Activated CD4-positive, alpha-beta memory T cell treated with anti-CD3 and anti-CD28 coated beads for 36 hours (primary cell): ENCODE measurements at regions of chr2 and their contacts with region 1.

Region 1: DNA sequence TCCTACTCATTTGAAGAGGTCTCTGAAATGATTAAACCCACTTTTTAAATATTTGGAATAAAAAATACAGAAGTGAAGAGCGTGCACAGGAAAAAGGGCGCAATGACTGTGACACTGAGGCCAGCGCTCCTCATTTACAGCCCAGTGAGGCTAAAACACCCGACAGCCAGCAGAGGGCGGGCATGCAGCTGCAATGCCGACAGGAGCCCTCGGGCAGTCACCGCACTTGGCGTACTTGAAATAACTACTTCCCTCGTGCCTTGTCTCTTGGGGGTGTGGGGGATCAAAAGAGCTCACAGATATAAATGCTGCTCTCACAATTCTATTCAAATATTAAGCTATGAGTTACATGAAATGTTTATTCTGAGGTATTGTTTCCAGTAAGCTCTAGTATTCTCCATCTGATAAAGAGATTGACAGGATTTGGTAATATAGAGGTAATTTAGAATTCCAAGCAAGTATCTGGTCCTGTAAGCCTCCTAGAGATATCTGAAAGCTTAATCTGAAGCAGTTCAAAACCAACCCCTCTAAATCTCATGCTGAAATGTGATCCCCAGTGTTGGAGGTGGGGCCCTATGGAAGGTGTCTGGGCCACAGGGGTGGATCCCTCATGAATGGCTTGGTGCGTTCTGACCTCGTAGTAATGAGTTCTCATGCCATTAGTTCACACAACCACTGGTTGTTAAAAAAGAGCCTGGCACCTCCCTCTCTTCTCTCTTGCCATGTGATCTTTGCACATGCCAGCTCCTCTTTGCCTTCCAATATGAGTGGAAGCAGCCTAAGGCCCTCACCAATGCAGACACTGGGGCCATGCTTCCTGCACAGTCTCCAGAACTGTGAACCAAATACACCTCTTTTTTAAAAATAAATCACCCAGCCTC is 93.6 kb downstream of the ZAP70 start:
- DNase-seq: peak; percentile 86
- H3K4me3 Mint-ChIP-seq: no peak overlapping the region
- H3K27ac Mint-ChIP-seq: no peak overlapping the region
- H3K4me1 Mint-ChIP-seq: no peaks in the 10 kb centered on the region
- H3K27me3 Mint-ChIP-seq: no peaks in the 10 kb centered on the region

Region 2: DNA sequence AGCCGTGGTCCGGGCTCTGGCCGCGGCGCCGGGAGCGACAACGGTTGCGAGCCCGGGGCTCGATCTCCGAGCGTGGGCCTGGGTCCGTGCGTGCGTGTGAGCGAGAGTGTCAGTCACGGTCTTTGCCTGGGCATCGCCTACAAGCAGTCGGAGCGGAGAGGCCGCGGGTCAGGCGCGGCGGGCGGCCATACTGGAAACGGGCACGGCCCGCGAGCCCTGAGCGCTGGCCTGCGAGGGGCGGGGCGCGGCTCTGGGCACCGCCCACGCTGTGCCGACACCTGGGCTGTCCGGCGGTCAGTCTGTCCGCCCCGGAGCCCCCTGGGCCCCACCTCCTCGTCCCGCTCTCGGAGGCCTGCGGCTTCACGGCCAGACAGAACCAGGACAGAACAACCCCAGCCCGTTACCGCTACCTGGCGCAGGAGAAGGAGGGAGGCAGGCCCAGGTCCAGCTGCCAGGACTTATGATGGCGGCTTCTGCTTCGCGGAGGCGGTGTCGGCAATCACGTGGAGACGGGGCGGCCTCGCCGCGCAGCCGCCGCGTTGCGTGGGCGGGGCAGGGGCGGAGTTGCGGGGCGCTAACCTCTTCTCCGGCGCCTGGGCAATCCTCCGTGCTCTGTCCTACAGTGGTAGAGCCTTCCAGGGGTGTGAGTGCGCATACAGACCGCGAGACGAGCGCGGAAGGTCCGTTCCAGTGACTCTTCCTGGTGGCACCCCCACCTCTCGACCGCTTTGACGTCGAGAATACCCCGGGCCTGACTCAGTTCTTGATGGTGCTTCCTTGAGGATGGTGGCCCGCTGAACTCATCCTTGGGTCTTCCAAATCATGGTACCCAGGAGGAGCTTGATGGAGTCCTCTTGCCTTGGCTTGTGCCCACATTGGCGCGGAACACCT is 189.0 kb after region 1 on chr2 and contains the start of gene TMEM131:
- CTCF ChIA-PET with region 1: interaction called, 7 read pairs
- POLR2A ChIA-PET with region 1: no interaction called
- intact Hi-C with region 1: loop called (anchors 2 kb)
- DNase-seq: peak; percentile 97
- H3K4me3 Mint-ChIP-seq: peak within 1 kb of the TSS; percentile 87
- H3K27ac Mint-ChIP-seq: peak within 1 kb of the TSS; percentile 95
- H3K4me1 Mint-ChIP-seq: peaks cover 32% of the 10 kb centered on the region
- H3K27me3 Mint-ChIP-seq: no peaks in the 10 kb centered on the region
- total RNA-seq, gene TMEM131: 23.1 to 23.7 TPM

Region 3: DNA sequence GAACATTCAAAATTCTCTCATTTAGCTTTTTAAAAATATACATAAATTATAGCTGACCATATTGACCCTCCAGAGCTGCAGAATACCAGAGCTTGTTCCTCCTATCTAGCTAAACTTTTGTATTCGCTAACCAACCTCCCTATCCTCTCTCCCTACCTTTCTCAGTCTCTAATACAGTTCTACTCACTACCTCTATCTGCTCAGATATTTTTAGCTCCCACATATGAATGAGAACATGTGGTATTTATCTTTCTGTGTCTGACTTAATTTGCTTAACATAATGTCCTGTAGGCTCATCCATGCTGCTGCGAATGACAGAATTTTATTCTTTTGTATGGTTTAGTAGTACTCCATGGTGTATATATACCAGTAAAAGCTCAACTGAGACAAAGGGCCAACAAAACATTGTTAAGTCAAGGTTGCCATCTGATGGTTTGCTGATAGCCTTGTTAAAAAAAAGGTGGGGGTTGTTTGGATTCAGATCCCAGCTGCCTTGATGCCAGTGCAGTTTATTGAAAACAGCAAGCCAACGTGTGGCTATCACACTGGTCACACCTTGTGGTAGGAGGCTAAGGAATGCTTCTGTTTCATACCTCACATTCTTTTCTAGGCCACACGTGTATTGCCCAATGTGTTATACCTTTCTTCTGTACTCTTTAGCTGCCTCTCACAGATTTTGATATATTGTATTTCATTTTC is 381.5 kb after region 1 on chr2:
- CTCF ChIA-PET with region 1: interaction called, 12 read pairs
- POLR2A ChIA-PET with region 1: no interaction called
- intact Hi-C with region 1: loop called (anchors 5 kb)
- DNase-seq: no peak
- H3K4me3 Mint-ChIP-seq: no peak overlapping the region
- H3K27ac Mint-ChIP-seq: no peak overlapping the region
- H3K4me1 Mint-ChIP-seq: no peaks in the 10 kb centered on the region
- H3K27me3 Mint-ChIP-seq: peaks cover 7% of the 10 kb centered on the region

Region 4: DNA sequence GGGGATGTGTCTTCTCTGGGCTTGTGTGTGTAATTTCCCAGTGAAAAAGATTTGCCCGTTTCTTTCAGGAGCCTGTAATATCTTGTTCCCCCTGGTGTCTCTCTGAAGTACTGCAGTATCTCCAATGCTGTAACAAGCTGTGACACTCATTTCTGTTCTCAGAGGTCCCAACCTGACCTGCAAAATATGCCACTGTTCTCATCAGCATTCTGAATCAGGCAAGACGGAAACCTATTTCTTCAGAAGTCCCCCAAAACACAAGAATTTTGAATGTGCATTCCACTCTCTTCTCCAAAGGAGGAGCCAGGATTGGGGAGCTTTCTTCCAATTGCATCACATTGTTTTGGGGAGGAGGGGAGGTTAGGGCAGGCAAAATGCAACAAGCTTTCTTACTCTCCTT is 462.3 kb after region 1 on chr2:
- CTCF ChIA-PET with region 1: interaction called, 23 read pairs
- POLR2A ChIA-PET with region 1: no interaction called
- intact Hi-C with region 1: loop called (anchors 1 kb)
- DNase-seq: no peak
- H3K4me3 Mint-ChIP-seq: no peak overlapping the region
- H3K27ac Mint-ChIP-seq: no peak overlapping the region
- H3K4me1 Mint-ChIP-seq: no peaks in the 10 kb centered on the region
- H3K27me3 Mint-ChIP-seq: peaks cover 7% of the 10 kb centered on the region